ENCODE measurements at regions of chr10 and their contacts with region 1.

Region 1: DNA sequence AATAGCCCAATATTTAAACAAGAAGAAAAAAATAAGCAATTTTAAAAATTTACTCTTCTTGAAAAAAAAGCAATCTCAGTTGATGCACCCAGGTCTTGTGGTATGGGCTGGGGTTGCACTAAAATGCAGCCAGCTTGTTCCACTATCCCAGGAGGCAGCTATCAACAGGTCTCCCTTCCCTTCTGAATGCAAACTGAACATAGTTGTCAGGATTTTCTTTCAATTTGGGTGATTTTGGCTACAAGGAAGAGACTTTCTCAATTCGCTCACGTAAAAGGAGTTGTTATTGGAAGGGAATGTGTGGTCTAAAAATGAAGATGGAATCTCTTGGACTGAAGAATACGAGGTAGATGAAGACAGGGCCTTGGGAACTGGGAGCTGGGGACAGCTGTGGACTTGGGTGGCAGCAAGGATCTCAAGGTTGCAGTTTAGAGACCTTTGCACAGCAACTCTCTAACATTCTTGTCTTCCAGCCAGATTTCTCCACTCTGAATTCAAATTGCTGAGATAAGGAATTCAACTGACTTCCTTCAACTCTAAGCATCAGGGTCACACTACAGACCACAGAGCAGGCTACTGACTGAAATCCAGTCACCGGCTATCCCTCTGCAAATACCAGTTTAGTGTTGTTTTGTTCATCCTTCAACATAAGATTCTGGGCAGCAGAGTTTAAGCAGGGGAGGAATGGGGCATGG is 3.1 kb upstream of the TMEM26 start:
- DNase-seq: no peak
- H3K4me3 ChIP-seq: no peak overlapping the region
- H3K27ac ChIP-seq: no peak overlapping the region
- H3K4me1 ChIP-seq: no peaks in the 10 kb centered on the region
- H3K27me3 ChIP-seq: no peaks in the 10 kb centered on the region
- CTCF ChIP-seq: no peak
- POLR2A ChIP-seq: no peak

Region 2: GRCh38 chr10:62284221-62284620 is 828.0 kb after region 1 on chr10:
- intact Hi-C with region 1: loop called (anchors 5 kb)
- DNase-seq: no peak
- H3K4me3 ChIP-seq: no peak overlapping the region
- H3K27ac ChIP-seq: no peak overlapping the region
- H3K4me1 ChIP-seq: no peaks in the 10 kb centered on the region
- H3K27me3 ChIP-seq: no peaks in the 10 kb centered on the region
- CTCF ChIP-seq: no peak
- POLR2A ChIP-seq: no peak

Measured in breast epithelium (tissue), 4 donors.